T-cell (primary cell): ENCODE measurements at regions of chr17 and their contacts with region 1.

Region 1: GRCh38 chr17:18975597-18975996 is 23.6 kb downstream of the SLC5A10 start:
- DNase-seq: no peak
- ATAC-seq: no peak
- H3K4me3 ChIP-seq: no peak overlapping the region
- H3K4me3 Mint-ChIP-seq: no peak overlapping the region
- H3K27ac ChIP-seq: no peak overlapping the region
- H3K27ac Mint-ChIP-seq: no peak overlapping the region
- H3K4me1 ChIP-seq: no peaks in the 10 kb centered on the region
- H3K4me1 Mint-ChIP-seq: no peaks in the 10 kb centered on the region
- H3K27me3 ChIP-seq: no peaks in the 10 kb centered on the region
- H3K27me3 Mint-ChIP-seq: no peaks in the 10 kb centered on the region

Region 2: DNA sequence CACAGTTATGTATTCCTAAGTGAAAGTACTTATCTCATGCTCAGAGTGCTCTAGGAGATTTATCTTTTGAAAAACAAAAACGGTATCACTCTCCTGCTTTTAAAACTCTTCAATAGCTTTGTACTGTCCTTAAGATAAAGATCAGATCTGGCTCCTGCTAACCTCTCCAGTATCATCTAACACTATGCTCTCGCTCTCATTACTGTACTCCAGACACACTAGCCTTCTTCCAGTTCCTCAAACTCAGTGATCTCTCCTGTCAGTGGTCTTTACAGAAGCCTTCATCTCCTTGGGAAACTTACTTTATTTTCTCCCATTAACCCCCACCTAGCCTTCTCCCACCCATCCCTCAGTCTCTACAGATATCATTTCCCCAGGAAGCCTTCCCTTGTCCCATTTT is 882.0 kb after region 1 on chr17:
- CTCF ChIA-PET with region 1: no interaction called
- POLR2A ChIA-PET with region 1: interaction called in 1 of 2 experiments, 11 read pairs
- DNase-seq: no peak
- ATAC-seq: no peak
- H3K4me3 ChIP-seq: no peak overlapping the region
- H3K4me3 Mint-ChIP-seq: no peak overlapping the region
- H3K27ac ChIP-seq: no peak overlapping the region
- H3K27ac Mint-ChIP-seq: no peak overlapping the region
- H3K4me1 ChIP-seq: no peaks in the 10 kb centered on the region
- H3K4me1 Mint-ChIP-seq: peaks cover 0 to 5% (median 0%) of the 10 kb centered on the region in 3 donors
- H3K27me3 ChIP-seq: no peaks in the 10 kb centered on the region
- H3K27me3 Mint-ChIP-seq: no peaks in the 10 kb centered on the region